ENCODE measurements at regions of chr19 and their contacts with region 1.

Region 1: DNA sequence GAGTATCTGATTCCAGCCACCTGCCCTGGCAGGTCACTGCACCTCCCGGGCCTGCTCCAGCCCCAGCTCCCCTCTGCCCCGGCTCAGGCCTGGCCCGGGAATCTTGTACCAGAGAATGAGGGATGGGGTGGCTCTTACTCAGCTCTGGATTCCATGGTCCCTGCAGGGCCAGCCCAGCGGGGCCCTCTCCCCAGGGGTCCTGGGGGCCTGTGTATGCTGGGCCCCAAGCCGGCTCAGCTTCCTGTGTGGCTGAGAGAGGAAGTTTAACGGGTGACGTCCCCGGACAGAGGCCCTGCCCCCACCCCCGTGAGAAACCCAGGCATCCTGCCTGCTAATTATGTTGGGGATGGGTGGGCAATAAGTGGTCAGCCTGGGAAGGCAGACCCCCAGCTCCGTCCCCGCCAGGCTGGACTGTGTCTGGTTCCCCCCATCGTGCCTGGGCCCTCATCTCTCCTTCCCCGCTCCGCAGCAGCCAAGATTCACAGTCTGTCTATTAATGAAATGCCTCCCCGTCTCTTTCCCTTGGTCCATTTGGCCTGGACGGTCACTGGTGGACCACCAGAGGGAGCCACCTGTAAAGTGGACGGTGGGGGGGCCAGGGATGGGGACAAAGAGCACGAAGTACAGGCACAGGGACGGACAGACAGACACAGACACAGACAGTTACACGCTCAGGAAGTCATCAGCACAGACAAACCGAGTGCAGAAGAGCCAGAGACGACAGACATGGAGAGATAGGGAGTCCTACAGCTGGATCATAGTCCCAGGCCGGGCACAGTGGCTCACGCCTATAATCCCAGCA is at the start of gene DENND1C:
- DNase-seq: peak; percentile 49 to 79 (median 72)
- H3K4me3 ChIP-seq: peak within 1 kb of the TSS; percentile 22 to 83 (median 68)
- H3K27ac ChIP-seq: peak within 1 kb of the TSS; percentile 72 to 86
- H3K4me1 ChIP-seq: peaks cover 0 to 20% (median 18%) of the 10 kb centered on the region in 4 experiments
- H3K27me3 ChIP-seq: no peaks in the 10 kb centered on the region

Region 2: GRCh38 chr19:6501740-6502648 is 20.3 kb after region 1 on chr19 and contains the start of gene TUBB4A:
- CTCF ChIA-PET with region 1: interaction called, 18 read pairs
- POLR2A ChIA-PET with region 1: no interaction called
- DNase-seq: peak in 2 of 3 donors; percentile 33 to 57
- H3K4me3 ChIP-seq: peak within 1 kb of the TSS; percentile 44 to 78 (median 61)
- H3K27ac ChIP-seq: no peak within 1 kb of the TSS
- H3K4me1 ChIP-seq: peaks cover 0 to 22% (median 17%) of the 10 kb centered on the region in 4 experiments
- H3K27me3 ChIP-seq: peaks cover 0 to 4% (median 0%) of the 10 kb centered on the region in 5 experiments

Region 3: DNA sequence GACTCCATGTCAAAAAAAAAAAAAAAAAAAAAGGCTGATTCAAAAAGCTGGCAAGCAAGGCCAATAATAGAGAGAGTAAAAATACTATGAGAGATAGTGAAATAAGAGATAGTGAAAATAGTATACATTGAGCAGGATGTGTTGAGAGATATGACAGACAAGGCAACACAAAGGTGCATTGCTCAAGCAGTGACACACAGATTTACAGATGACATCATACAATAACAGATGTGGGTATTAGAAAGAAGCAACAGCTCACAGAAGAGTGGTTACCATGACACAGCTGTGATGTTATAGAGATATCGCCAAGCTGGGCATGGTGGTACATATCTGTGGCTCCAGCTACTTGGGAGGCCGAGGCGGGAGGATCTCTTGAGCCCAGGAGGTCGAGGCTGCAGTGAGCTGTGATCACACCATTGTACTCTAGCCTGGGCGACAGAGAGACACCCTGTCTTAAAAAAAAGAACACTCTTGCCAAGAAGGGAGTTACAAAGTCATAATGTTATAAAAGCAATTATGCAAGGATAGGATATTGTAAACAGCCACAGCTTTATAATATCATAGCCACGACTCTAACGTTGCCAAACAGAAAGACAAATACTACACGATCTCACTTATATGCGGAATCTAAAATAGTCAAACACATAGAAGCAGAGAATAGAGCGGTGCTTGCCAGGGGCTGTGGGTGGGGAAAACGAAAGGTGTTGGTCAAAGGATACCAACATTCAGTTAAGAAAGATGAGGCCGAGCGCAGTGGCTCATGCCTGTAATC is 59.4 kb after region 1 on chr19:
- CTCF ChIA-PET with region 1: no interaction called
- POLR2A ChIA-PET with region 1: no interaction called
- DNase-seq: no peak
- H3K4me3 ChIP-seq: no peak overlapping the region
- H3K27ac ChIP-seq: no peak overlapping the region
- H3K4me1 ChIP-seq: peaks cover 0 to 6% (median 4%) of the 10 kb centered on the region in 4 experiments
- H3K27me3 ChIP-seq: peaks cover 0 to 4% (median 0%) of the 10 kb centered on the region in 5 experiments

Measured in common myeloid progenitor, CD34-positive (primary cell).